T-cell (primary cell): ENCODE measurements at regions of chr10 and their contacts with region 1.

Region 1: GRCh38 chr10:28604567-28605536 is 71.9 kb downstream of the WAC start:
- DNase-seq: no peak
- ATAC-seq: no peak
- H3K4me3 ChIP-seq: no peak overlapping the region
- H3K4me3 Mint-ChIP-seq: no peak overlapping the region
- H3K27ac ChIP-seq: no peak overlapping the region
- H3K27ac Mint-ChIP-seq: peak overlapping the region in 1 of 2 donors; percentile 6
- H3K4me1 ChIP-seq: peaks cover 0 to 6% of the 10 kb centered on the region in 2 experiments
- H3K4me1 Mint-ChIP-seq: peaks cover 58 to 69% (median 59%) of the 10 kb centered on the region in 3 donors
- H3K27me3 ChIP-seq: no peaks in the 10 kb centered on the region
- H3K27me3 Mint-ChIP-seq: no peaks in the 10 kb centered on the region

Region 2: DNA sequence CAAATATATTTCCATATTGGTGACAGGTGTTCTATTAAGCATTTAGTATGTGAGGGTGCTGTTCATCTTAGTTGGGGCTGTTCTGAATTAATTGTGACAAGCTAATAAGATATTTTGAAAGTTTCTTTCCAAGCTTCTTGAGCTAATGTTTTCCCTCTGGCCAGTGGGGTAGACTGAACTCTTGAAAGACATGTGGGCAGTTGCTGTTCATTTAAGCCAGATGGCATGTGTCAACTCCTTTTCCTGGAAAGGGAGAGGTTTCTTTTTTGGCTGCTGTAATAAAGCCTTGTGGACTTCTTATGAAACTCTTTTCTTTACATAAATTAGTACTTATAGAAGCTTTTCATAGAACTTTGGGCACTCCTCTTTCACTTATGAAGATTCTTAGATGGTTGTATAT is 1079.0 kb before region 1 on chr10:
- CTCF ChIA-PET with region 1: no interaction called
- POLR2A ChIA-PET with region 1: interaction called in 1 of 2 experiments, 10 read pairs
- DNase-seq: no peak
- ATAC-seq: no peak
- H3K4me3 ChIP-seq: no peak overlapping the region
- H3K4me3 Mint-ChIP-seq: no peak overlapping the region
- H3K27ac ChIP-seq: no peak overlapping the region
- H3K27ac Mint-ChIP-seq: no peak overlapping the region
- H3K4me1 ChIP-seq: peaks cover 3 to 13% of the 10 kb centered on the region in 2 experiments
- H3K4me1 Mint-ChIP-seq: peaks cover 78 to 82% (median 79%) of the 10 kb centered on the region in 3 donors
- H3K27me3 ChIP-seq: no peaks in the 10 kb centered on the region
- H3K27me3 Mint-ChIP-seq: no peaks in the 10 kb centered on the region

Region 3: GRCh38 chr10:27794157-27794556 is 810.7 kb before region 1 on chr10:
- CTCF ChIA-PET with region 1: no interaction called
- POLR2A ChIA-PET with region 1: no interaction called
- DNase-seq: no peak
- ATAC-seq: no peak
- H3K4me3 ChIP-seq: no peak overlapping the region
- H3K4me3 Mint-ChIP-seq: no peak overlapping the region
- H3K27ac ChIP-seq: no peak overlapping the region
- H3K27ac Mint-ChIP-seq: no peak overlapping the region
- H3K4me1 ChIP-seq: no peaks in the 10 kb centered on the region
- H3K4me1 Mint-ChIP-seq: no peaks in the 10 kb centered on the region
- H3K27me3 ChIP-seq: no peaks in the 10 kb centered on the region
- H3K27me3 Mint-ChIP-seq: peaks cover 13 to 31% of the 10 kb centered on the region in 2 donors

Region 4: GRCh38 chr10:28137907-28138880 is 466.7 kb before region 1 on chr10:
- CTCF ChIA-PET with region 1: no interaction called
- POLR2A ChIA-PET with region 1: no interaction called
- DNase-seq: no peak
- ATAC-seq: no peak
- H3K4me3 ChIP-seq: no peak overlapping the region
- H3K4me3 Mint-ChIP-seq: no peak overlapping the region
- H3K27ac ChIP-seq: no peak overlapping the region
- H3K27ac Mint-ChIP-seq: no peak overlapping the region
- H3K4me1 ChIP-seq: no peaks in the 10 kb centered on the region
- H3K4me1 Mint-ChIP-seq: peaks cover 0 to 6% (median 0%) of the 10 kb centered on the region in 3 donors
- H3K27me3 ChIP-seq: no peaks in the 10 kb centered on the region
- H3K27me3 Mint-ChIP-seq: no peaks in the 10 kb centered on the region